ENCODE measurements at regions of chr10 and their contacts with region 1.

Region 1: DNA sequence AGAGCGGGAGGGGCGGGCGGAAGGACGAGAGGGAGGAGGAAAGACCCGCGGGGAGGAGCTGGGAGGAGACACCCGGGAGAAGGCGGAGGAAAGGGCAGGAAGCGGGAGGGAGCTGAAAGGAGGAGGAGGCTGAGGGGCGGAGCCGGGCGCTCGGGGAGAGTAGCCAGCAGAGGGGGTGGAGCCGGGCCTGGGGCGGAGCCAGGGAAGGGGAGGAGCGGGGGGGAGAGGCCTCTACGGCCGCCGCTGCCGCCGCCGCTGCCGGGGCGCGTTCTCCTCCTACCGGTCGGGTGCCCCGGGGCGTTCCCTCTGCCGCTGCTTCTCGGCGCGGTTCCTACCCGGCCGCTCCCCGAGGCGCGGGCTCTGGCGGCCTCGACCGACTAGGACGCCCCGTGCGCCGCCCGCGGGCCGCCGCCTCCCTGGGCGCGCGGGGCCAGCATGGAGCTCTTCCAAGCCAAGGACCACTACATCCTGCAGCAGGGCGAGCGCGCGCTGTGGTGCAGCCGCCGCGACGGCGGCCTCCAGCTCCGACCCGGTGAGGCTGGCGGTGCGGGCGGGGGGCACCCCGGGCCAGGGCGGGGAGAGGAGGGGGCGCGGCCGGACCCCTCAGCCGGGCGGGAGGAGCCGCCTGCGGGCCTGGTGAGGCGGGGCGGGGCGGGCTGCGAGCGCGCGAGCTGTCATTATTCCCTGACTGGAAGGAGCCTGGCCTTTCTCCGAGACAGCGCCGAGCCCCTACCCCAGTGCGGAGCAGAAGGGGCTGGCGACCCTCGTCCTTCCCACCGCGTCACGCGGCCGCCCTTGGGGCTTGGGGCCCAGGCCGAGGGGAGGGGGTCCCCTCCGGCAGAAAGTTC is at the start of gene INPP5F:
- DNase-seq: peak; percentile 95
- ATAC-seq: peak; percentile 93
- H3K4me3 ChIP-seq: peak within 1 kb of the TSS; percentile 55 to 85 (median 70)
- H3K4me3 Mint-ChIP-seq: peak within 1 kb of the TSS; percentile 98
- H3K27ac ChIP-seq: peak within 1 kb of the TSS; percentile 73 to 90
- H3K27ac Mint-ChIP-seq: peak within 1 kb of the TSS; percentile 95
- H3K4me1 ChIP-seq: peaks cover 38 to 51% of the 10 kb centered on the region in 2 donors
- H3K4me1 Mint-ChIP-seq: peaks cover 48% of the 10 kb centered on the region
- H3K27me3 ChIP-seq: no peaks in the 10 kb centered on the region
- H3K27me3 Mint-ChIP-seq: no peaks in the 10 kb centered on the region
- CTCF ChIP-seq: peak; percentile 55
- total RNA-seq, gene INPP5F: 37.5 and 42.5 TPM in 2 replicates

Region 2: DNA sequence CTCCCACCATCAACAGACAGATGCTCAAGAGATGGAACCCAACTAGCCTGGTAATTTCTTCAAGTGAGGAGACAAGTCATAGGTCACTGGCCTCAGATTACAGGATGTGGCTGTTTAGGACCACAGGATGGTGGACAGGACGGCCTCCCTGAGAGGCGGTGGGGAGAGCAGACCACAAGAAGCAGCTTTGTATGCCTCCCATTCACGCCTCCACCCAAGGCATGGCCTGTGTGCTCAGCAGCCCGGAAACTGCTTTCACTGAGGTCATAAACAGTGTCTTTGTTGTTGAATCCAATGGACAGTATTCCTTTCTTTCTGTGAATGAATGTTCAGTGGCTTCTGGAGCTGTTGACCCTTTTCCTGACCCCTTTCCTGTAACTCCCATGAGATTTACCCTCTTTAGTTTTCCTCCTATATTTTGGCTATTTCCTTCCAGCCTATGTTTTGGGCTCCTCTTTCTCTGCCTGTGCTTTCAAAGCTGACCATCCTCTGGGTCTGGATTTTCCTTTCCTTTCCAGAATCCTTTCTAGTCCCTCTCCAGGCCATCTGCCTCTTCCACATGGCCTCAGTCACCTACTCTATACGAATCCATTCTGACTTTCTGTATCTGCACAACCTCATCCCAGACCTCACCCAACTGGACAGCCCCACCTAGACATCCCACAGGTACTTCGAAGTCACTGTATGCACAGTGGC is 32.6 kb before region 1 on chr10:
- CTCF ChIA-PET with region 1: interaction called, 99 read pairs
- POLR2A ChIA-PET with region 1: no interaction called
- intact Hi-C with region 1: no loop called
- DNase-seq: no peak
- ATAC-seq: peak; percentile 28
- H3K4me3 ChIP-seq: no peak overlapping the region
- H3K4me3 Mint-ChIP-seq: no peak overlapping the region
- H3K27ac ChIP-seq: no peak overlapping the region
- H3K27ac Mint-ChIP-seq: peak overlapping the region; percentile 2
- H3K4me1 ChIP-seq: peaks cover 17 to 23% of the 10 kb centered on the region in 2 donors
- H3K4me1 Mint-ChIP-seq: peaks cover 40% of the 10 kb centered on the region
- H3K27me3 ChIP-seq: no peaks in the 10 kb centered on the region
- H3K27me3 Mint-ChIP-seq: no peaks in the 10 kb centered on the region
- CTCF ChIP-seq: no peak

Region 3: GRCh38 chr10:119705434-119705831 is 20.6 kb before region 1 on chr10:
- CTCF ChIA-PET with region 1: interaction called, 33 read pairs
- POLR2A ChIA-PET with region 1: interaction called, 65 read pairs
- intact Hi-C with region 1: loop called (anchors 1 kb)
- DNase-seq: peak; percentile 62
- ATAC-seq: peak; percentile 13
- H3K4me3 ChIP-seq: peak overlapping the region in 3 of 5 experiments; percentile 18 to 46 (median 42)
- H3K4me3 Mint-ChIP-seq: peak overlapping the region; percentile 90
- H3K27ac ChIP-seq: peak overlapping the region; percentile 94
- H3K27ac Mint-ChIP-seq: peak overlapping the region; percentile 98
- H3K4me1 ChIP-seq: peaks cover 93 to 97% of the 10 kb centered on the region in 2 donors
- H3K4me1 Mint-ChIP-seq: peaks cover 81% of the 10 kb centered on the region
- H3K27me3 ChIP-seq: no peaks in the 10 kb centered on the region
- H3K27me3 Mint-ChIP-seq: no peaks in the 10 kb centered on the region
- CTCF ChIP-seq: no peak

Measured in B cell (primary cell).